OCI-LY7 (cell line): ENCODE measurements at regions of chr4 and their contacts with region 1.

Region 1: DNA sequence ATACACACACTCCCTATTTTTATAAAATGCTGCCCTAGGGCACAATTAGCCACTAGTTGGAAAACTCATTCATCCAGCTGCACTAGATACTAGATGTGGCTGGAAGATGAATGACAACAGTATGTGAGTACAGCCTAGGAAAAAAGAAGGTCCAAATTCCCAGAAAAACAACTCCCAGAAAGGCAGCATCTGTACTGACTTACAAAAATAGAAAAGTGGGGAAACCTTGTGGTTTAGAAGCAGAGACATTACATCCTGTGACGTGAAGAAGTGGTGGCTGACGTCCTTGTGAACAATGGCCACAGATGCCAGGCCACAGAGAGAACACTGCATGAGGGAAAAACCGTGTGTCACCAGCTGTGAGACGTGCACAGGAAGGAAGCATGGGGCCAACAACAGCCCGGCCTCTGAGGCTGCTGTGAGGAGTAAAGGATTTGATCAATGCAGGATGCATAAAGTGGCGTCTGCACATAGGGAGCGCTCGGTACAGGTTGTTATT is 81.2 kb downstream of the SPRY1 start:
- DNase-seq: peak; percentile 70
- H3K4me3 ChIP-seq: peak overlapping the region; percentile 38
- H3K27ac ChIP-seq: peak overlapping the region; percentile 43
- H3K4me1 ChIP-seq: peaks cover 31% of the 10 kb centered on the region
- CTCF ChIP-seq: no peak

Region 2: DNA sequence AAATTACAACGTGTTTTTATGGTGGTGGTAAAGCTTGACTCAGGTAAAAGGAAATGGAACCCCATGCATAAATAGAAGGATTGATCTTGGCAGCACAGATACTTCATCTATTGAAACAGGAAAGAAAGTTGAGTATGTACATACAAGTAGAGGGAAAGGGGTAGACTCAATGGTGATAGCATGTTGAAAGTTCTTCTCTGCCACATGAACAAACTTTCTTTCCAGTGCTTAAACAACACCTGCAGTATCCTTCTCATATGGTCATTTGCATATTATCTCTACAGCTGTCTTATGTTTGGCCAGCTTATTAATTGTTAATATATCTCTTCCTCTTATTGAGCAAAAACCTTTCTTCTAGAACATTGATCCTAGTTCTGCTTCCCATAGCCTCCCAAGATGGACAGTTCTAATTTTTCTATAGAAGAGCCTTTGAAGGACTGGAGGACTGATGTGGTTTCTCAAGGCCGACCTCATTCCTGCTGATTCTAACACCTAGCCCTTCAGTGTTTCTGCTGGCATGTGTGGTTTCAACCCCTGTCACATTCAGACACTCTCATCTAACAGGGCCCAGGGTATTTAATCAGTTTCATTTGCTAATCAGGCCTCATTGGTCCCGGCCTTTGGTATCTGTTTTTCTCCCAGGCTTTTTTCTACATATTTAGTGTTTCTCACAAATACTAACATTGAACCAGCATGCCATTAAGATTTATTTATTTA is 189.3 kb before region 1 on chr4:
- CTCF ChIA-PET with region 1: no interaction called
- POLR2A ChIA-PET with region 1: no interaction called
- intact Hi-C with region 1: no loop called
- DNase-seq: peak; percentile 27
- H3K4me3 ChIP-seq: no peak overlapping the region
- H3K27ac ChIP-seq: no peak overlapping the region
- H3K4me1 ChIP-seq: peaks cover 11% of the 10 kb centered on the region
- CTCF ChIP-seq: no peak

Region 3: GRCh38 chr4:123452616-123453015 is 25.1 kb before region 1 on chr4:
- CTCF ChIA-PET with region 1: interaction called, 4 read pairs
- POLR2A ChIA-PET with region 1: interaction called, 10 read pairs
- intact Hi-C with region 1: no loop called
- DNase-seq: peak; percentile 26
- H3K4me3 ChIP-seq: no peak overlapping the region
- H3K27ac ChIP-seq: no peak overlapping the region
- H3K4me1 ChIP-seq: peaks cover 75% of the 10 kb centered on the region
- CTCF ChIP-seq: no peak

Region 4: DNA sequence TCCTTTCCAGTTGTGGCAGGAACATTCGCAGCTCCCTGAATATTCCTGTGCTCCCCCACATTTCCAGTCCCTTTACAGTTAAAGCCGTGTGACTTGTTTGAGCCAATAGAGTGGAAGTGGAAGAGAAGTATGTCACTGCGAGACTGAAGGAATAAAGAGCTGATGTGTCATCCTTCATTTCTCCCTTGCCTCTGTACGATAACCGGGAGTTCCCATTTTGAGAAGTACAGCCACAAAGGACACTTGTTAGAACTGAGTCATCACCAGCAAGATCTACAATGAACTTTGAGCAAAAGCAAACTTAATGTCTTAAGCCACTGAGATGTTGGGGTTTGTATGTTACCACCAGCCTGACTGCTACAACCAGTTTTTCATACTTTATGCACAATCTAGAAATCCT is 11.2 kb after region 1 on chr4:
- CTCF ChIA-PET with region 1: no interaction called
- POLR2A ChIA-PET with region 1: interaction called, 11 read pairs
- intact Hi-C with region 1: no loop called
- DNase-seq: no peak
- H3K4me3 ChIP-seq: no peak overlapping the region
- H3K27ac ChIP-seq: no peak overlapping the region
- H3K4me1 ChIP-seq: peaks cover 11% of the 10 kb centered on the region
- CTCF ChIP-seq: no peak

Region 5: GRCh38 chr4:124337874-124338273 is 860.1 kb after region 1 on chr4:
- CTCF ChIA-PET with region 1: no interaction called
- POLR2A ChIA-PET with region 1: no interaction called
- intact Hi-C with region 1: no loop called
- DNase-seq: no peak
- H3K4me3 ChIP-seq: no peak overlapping the region
- H3K27ac ChIP-seq: no peak overlapping the region
- H3K4me1 ChIP-seq: no peaks in the 10 kb centered on the region
- CTCF ChIP-seq: no peak